Activated T-helper 2 cell treated with anti-CD3 and anti-CD28 coated beads, Interferon-gamma antibody, Interleukin-2, Interleukin-4, amounts not matched to agents 10 μg/mL and 5 μg/mL and 100 μg/mL, durations not matched to agents 14 hours and 24 hours and 36 hours (primary cell): ENCODE measurements at regions of chrX and their contacts with region 1.

Region 1: GRCh38 chrX:47650164-47651042 is at the start of gene ELK1:
- DNase-seq: peak; percentile 89
- H3K4me3 Mint-ChIP-seq: peak within 1 kb of the TSS; percentile 93
- H3K27ac Mint-ChIP-seq: peak within 1 kb of the TSS; percentile 97
- H3K4me1 Mint-ChIP-seq: peaks cover 50% of the 10 kb centered on the region
- H3K27me3 Mint-ChIP-seq: no peaks in the 10 kb centered on the region
- total RNA-seq, gene ELK1: 108 and 110 TPM in 2 replicates

Region 2: DNA sequence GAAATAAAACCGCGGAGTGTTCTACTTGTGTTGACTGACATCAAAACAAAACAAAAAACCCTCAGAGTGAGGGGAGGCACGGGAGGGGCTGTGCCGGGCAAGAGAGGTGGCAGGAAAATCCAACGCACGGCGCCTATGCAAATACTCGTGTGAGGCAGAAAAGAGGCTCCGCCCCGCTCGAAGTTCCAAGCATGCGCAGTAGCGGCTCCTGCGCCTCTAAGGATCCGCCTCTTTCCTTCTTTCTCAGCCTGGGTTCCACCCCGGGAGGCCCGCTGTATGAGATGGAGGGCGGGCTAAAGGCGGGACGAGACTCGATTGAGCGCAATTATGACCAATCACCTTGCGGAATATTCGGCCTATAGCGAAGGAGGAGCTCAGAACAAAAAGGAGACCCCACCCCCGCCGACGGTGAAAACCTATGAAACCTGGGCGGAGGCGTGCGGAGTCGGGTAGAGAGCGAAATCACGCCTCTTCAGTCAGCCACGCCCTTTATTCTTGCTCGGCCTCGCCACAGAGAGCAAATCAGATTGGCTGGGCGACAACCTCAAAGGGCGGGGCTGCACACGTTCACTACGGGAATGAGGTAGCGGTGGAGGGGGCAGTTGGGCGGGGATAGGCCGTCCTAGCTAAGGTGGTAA is 432.6 kb before region 1 on chrX:
- intact Hi-C with region 1: loop called (anchors 2 kb)
- DNase-seq: peak; percentile 93
- H3K4me3 Mint-ChIP-seq: peak overlapping the region; percentile 91
- H3K27ac Mint-ChIP-seq: peak overlapping the region; percentile 99
- H3K4me1 Mint-ChIP-seq: peaks cover 34% of the 10 kb centered on the region
- H3K27me3 Mint-ChIP-seq: no peaks in the 10 kb centered on the region

Region 3: GRCh38 chrX:47836164-47837072 is 186.0 kb after region 1 on chrX and contains the start of gene ZNF81:
- intact Hi-C with region 1: loop called (anchors 5 kb)
- DNase-seq: peak; percentile 86
- H3K4me3 Mint-ChIP-seq: peak within 1 kb of the TSS; percentile 92
- H3K27ac Mint-ChIP-seq: peak within 1 kb of the TSS; percentile 97
- H3K4me1 Mint-ChIP-seq: peaks cover 13% of the 10 kb centered on the region
- H3K27me3 Mint-ChIP-seq: no peaks in the 10 kb centered on the region
- total RNA-seq, gene ZNF81: 6.1 and 8.1 TPM in 2 replicates